ENCODE measurements at regions of chr2 and their contacts with region 1.

Region 1: GRCh38 chr2:107717661-107718060 is 109.0 kb upstream of the RGPD4 start:
- DNase-seq: no peak
- H3K4me3 ChIP-seq: no peak overlapping the region
- H3K27ac ChIP-seq: no peak overlapping the region
- H3K4me1 ChIP-seq: peaks cover 5% of the 10 kb centered on the region
- H3K27me3 ChIP-seq: no peaks in the 10 kb centered on the region
- CTCF ChIP-seq: no peak

Region 2: DNA sequence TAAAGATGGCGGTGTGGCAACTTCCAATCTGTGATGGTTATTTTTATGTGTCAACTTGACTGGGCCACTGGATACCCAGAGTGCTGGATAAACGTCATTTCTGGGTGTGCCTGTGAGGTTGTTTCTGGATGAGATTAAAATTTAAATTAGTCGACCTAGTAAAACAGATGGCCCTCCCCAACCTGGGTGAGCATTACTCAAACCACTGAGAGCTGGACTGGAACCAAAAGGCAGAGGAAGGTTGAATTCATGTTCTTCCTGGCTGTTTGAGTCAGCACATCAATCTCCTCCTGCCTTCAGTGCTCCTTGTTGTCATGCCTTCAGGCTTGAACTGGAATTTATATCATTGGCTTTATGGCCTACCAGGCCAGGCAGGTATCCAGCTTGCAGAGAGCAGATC is 81.8 kb before region 1 on chr2:
- CTCF ChIA-PET with region 1: no interaction called
- dilution Hi-C with region 1: no loop called
- in situ Hi-C with region 1: no loop called
- intact Hi-C with region 1: loop called (anchors 5 kb)
- DNase-seq: peak; percentile 88
- H3K4me3 ChIP-seq: no peak overlapping the region
- H3K27ac ChIP-seq: no peak overlapping the region
- H3K4me1 ChIP-seq: peaks cover 8% of the 10 kb centered on the region
- H3K27me3 ChIP-seq: no peaks in the 10 kb centered on the region
- CTCF ChIP-seq: no peak

Region 3: GRCh38 chr2:107999158-107999557 is 281.5 kb after region 1 on chr2:
- CTCF ChIA-PET with region 1: no interaction called
- dilution Hi-C with region 1: no loop called
- in situ Hi-C with region 1: no loop called
- intact Hi-C with region 1: no loop called
- DNase-seq: no peak
- H3K4me3 ChIP-seq: no peak overlapping the region
- H3K27ac ChIP-seq: no peak overlapping the region
- H3K4me1 ChIP-seq: no peaks in the 10 kb centered on the region
- H3K27me3 ChIP-seq: no peaks in the 10 kb centered on the region
- CTCF ChIP-seq: no peak